Right ventricle myocardium inferior (tissue), 1 donor: ENCODE measurements at regions of chr15 and their contacts with region 1.

Region 1: DNA sequence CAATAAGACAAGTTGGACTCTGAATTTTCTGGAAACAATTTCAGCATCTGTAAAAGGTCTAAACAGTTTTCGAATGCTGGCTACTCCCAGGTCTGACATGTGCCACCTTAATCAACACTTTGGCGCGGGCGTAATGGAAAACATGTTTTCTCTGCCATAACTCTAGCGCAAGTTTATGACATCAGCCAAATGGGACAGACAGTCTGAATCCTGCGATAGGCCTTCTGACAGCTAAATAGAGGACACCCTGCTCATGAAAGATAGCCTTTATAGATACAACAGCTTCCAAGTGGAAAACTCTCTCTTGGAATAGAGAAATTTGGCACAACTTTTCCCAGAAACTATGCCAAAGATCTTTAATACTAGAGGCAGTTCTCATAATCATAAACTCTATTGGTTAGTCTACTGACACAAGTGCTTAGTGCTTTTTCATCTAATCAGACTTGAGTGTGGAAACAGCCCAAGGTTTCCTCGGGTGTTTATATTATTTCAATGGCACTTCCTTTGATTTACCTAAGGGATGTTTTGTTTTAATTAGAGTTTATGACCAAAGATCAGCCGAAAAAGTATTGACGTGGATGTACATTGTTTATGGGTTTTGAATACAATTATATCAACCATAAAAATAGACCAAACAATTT is 120.1 kb upstream of the DPH6 start:
- DNase-seq: peak; percentile 61
- ATAC-seq: peak; percentile 97

Region 2: GRCh38 chr15:35519541-35520149 is 146.4 kb before region 1 on chr15:
- intact Hi-C with region 1: loop called (anchors 5 kb)
- DNase-seq: no peak
- ATAC-seq: no peak

Region 3: DNA sequence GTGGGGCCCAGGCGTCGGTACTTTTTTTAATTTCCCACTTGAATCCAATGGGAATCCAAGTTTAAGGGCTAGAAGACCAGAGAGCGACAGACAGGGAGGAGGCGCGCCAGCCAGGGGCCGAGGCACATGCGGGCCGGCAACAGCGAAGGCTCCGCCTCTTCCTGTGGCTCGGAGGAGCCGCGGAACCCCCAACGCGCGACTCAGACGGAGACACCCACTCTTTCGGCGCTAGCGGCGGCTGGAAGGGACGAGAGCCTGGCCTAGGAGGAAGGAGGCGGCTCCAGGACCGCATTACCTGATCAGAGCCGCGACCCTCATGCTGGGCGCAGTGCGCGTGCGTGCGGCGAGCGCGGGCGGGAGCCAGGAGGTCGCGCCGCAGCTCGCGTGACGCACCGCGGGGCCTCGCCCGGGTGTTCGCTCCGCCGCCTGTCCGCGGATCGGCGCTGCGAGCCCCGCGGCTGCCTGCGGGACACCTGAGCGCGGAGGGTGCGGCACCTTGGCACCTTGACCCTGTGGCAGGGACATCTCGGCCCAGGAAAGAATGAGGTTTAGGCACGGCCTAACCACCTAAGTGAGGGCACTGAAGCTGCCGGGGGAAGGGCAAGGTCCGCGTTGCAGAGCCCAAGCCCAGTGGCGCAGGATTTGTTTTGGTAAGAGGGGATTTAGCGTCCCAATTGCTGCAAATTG is 120.0 kb before region 1 on chr15 and contains the start of gene DPH6:
- intact Hi-C with region 1: loop called (anchors 2 kb)
- DNase-seq: peak; percentile 93
- ATAC-seq: peak; percentile 96
- total RNA-seq, gene DPH6: 14.1 TPM

Region 4: DNA sequence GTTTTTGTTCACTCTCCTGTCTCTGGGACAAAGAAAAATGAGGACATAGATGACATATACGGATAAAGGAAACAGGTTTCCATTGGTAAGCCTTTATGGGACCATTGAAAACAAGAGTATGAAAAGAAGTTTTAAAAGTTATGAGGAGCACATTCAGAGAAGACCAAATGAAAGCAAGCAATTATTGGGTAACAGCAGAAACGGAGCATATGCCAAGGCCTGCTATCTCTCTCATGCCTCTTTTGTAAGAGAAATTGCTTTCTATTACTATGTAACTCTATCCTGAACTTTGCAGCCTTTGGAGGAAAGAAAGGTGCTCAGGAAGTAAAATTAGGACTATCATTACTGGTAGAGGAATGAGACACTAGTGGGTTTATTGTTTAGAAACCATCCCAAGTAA is 105.1 kb before region 1 on chr15:
- intact Hi-C with region 1: no loop called
- DNase-seq: no peak
- ATAC-seq: no peak

Region 5: DNA sequence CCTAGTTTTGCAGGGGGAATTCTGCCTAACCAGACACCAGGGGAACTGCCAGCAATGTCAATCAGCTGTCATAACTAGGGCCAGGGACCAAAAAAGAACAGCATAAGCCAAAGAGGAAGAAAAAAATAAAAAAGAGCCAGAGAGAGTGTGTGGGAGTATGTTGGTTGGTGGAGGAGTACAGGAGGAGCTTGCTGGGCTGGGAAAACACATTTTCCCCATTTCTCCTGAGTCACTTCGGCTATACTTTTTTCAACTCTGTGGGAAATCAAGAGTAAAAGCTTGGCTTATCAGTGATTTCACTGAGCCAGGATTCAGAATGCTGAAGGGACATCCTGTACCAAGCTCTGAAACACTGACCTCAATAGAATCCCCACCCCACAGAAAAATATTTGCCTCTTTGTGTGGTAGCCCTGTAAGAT is 24.7 kb after region 1 on chr15:
- intact Hi-C with region 1: loop called (anchors 1 kb)
- DNase-seq: no peak
- ATAC-seq: peak; percentile 95

Region 6: DNA sequence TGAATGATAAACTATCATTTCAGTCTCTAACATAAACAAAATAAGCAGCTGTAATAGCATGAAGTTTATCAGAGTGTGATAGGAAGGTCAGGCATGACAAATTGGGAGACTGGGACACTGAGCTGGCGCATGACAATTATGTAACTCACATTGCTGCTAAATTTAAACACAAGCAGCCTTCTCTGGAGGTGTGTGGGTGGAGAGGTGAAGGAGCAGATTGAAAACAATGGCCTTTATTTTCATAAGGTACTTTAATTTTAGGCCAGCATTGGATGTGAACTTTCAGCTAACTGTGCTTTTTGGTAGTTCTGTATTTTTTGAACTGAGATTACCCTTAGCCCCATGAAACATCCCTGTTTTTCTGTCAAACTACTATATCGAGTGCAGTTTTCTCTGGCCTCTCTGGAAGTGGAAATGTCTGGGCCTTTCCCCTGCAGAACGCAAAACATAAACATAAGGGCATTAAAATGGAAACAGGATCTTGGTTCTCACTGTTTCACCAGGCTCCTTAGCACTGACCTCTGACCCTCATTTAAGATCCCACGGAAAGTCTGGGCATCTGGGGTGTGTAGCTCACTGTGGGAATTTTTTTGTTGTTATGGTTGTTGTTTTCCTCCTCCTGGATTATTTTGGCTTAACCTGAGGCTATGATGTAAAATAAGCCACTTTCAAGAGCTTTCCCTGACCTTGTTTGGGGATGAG is 40.0 kb after region 1 on chr15:
- intact Hi-C with region 1: loop called (anchors 5 kb)
- DNase-seq: no peak
- ATAC-seq: peak; percentile 90

Region 7: GRCh38 chr15:35740761-35741160 is 74.7 kb after region 1 on chr15:
- intact Hi-C with region 1: no loop called
- DNase-seq: no peak
- ATAC-seq: no peak